GM12878 (cell line): ENCODE measurements at regions of chr19 and their contacts with region 1.

Region 1: GRCh38 chr19:38402967-38403861 is at the start of gene FAM98C:
- DNase-seq: peak; percentile 76
- ATAC-seq: peak; percentile 99
- H3K4me3 ChIP-seq: peak within 1 kb of the TSS; percentile 86
- H3K27ac ChIP-seq: peak within 1 kb of the TSS; percentile 72
- H3K4me1 ChIP-seq: no peaks in the 10 kb centered on the region
- H3K27me3 ChIP-seq: no peaks in the 10 kb centered on the region
- CTCF ChIP-seq: peak; percentile 88 to 94 (median 90)
- EP300 ChIP-seq: no peak
- POLR2A ChIP-seq: peak; percentile 85
- RAD21 ChIP-seq: peak; percentile 90
- polyA plus RNA-seq, gene FAM98C: 1.4 to 2.3 TPM

Region 2: DNA sequence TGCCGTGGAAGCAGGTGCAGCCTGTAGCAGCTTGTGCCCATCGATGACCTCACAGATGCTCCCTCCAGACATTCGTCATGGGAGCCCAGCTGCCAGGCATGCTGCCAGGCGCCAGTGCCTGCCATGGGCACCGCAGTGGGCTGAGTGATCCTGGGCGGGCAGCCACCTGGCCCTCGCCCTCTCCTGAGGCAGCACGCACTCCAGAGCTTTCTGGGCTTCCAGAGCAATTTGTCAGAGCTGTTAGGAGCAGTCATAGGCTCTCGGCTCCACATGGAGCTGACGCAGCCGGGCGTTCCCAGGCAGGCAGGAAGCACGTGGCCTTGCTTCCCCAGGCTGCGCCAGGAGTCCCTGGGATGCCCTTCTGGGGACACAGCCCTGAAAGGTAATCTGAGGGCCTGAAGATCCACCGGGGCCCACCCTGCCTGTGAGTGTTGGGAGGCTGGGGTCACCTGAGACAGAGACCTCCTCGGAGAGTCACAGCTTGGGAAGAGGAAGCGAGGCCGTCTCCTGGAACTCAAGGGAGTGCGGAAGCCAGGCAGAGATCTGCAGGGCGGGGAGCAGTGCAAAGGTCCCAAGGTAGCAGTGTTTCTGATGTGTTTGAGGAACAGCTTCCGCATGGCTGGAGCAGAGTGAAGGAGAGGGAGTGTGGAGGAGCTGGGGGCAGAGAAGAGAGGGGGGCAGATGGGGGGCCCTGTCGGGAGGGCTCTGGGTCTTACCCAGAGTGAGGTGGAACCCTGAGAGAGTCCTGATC is 229.7 kb before region 1 on chr19:
- CTCF ChIA-PET with region 1: no interaction called
- POLR2A ChIA-PET with region 1: no interaction called
- RAD21 ChIA-PET with region 1: no interaction called
- SMC1A ChIA-PET with region 1: no interaction called
- in situ Hi-C with region 1: no loop called
- intact Hi-C with region 1: no loop called
- DNase-seq: no peak
- ATAC-seq: no peak
- H3K4me3 ChIP-seq: no peak overlapping the region
- H3K27ac ChIP-seq: no peak overlapping the region
- H3K4me1 ChIP-seq: no peaks in the 10 kb centered on the region
- H3K27me3 ChIP-seq: no peaks in the 10 kb centered on the region
- CTCF ChIP-seq: no peak
- EP300 ChIP-seq: no peak
- POLR2A ChIP-seq: peak; percentile 40; the same call in 1 of the 2 replicates
- RAD21 ChIP-seq: no peak

Region 3: GRCh38 chr19:38245826-38246498 is 157.3 kb before region 1 on chr19:
- CTCF ChIA-PET with region 1: interaction called, 7 read pairs
- POLR2A ChIA-PET with region 1: no interaction called
- RAD21 ChIA-PET with region 1: interaction called, 14 read pairs
- SMC1A ChIA-PET with region 1: no interaction called
- in situ Hi-C with region 1: no loop called
- intact Hi-C with region 1: no loop called
- DNase-seq: no peak
- ATAC-seq: no peak
- H3K4me3 ChIP-seq: no peak overlapping the region
- H3K27ac ChIP-seq: no peak overlapping the region
- H3K4me1 ChIP-seq: no peaks in the 10 kb centered on the region
- H3K27me3 ChIP-seq: no peaks in the 10 kb centered on the region
- CTCF ChIP-seq: no peak
- EP300 ChIP-seq: no peak
- POLR2A ChIP-seq: no peak
- RAD21 ChIP-seq: no peak

Region 4: GRCh38 chr19:38425810-38426466 is 22.7 kb after region 1 on chr19 and contains the start of gene RASGRP4:
- CTCF ChIA-PET with region 1: interaction called, 9 read pairs
- POLR2A ChIA-PET with region 1: no interaction called
- RAD21 ChIA-PET with region 1: interaction called, 5 read pairs
- SMC1A ChIA-PET with region 1: interaction called, 17 read pairs
- in situ Hi-C with region 1: no loop called
- intact Hi-C with region 1: no loop called
- DNase-seq: no peak
- ATAC-seq: peak; percentile 71
- H3K4me3 ChIP-seq: peak within 1 kb of the TSS; percentile 44; the same call in 1 of the 2 replicates
- H3K27ac ChIP-seq: peak within 1 kb of the TSS; percentile 4; the same call in 1 of the 2 replicates
- H3K4me1 ChIP-seq: peaks cover 16% of the 10 kb centered on the region
- H3K27me3 ChIP-seq: no peaks in the 10 kb centered on the region
- CTCF ChIP-seq: peak in 1 of 3 experiments; percentile 4; a peak in 1 of 6 replicates
- EP300 ChIP-seq: no peak
- POLR2A ChIP-seq: no peak
- RAD21 ChIP-seq: no peak
- polyA plus RNA-seq, gene RASGRP4: 0.26 to 0.55 TPM

Region 5: DNA sequence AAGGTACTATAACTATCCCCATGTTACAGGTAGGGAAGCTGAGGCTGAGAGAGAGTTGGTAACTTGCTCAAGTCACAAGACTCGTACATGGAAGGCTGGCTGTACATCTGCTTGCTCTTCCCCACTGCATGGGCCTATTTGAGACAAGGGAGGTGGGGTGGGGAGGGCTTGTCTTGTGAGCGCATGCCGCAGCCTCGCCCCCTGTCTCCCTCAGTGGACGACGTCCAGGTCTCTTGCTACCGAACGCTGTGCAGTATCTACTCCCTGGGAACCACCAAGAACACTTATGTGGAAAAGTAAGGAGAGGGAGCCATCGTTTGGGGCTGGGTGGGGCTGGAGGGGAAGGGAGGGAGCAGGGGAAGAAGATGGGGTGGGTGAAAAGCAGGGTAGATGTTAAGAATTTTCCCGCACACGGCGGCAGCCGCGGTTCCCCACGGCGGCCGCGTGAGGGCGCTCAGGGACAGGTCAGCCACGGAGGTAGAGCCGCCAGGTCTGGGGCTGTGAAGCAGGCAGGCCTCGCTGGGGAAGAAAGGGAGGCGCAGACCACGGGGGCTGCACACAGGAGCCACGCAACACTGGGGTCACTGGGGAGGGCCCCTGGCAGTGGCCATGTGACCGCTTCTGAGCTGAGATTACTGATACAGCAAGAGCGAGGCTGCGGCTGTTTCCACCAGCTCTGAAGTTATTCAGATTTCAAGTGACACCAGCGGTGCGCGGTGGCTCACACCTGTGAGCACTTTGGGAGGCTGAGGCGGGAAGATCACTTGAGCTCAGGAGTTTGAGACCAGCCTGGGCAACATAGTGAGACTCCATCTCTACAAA is 111.8 kb after region 1 on chr19:
- CTCF ChIA-PET with region 1: interaction called, 23 read pairs
- POLR2A ChIA-PET with region 1: no interaction called
- RAD21 ChIA-PET with region 1: interaction called, 17 read pairs
- SMC1A ChIA-PET with region 1: interaction called, 5 read pairs
- in situ Hi-C with region 1: no loop called
- intact Hi-C with region 1: no loop called
- DNase-seq: no peak
- ATAC-seq: peak; percentile 96
- H3K4me3 ChIP-seq: no peak overlapping the region
- H3K27ac ChIP-seq: no peak overlapping the region
- H3K4me1 ChIP-seq: peaks cover 6% of the 10 kb centered on the region
- H3K27me3 ChIP-seq: no peaks in the 10 kb centered on the region
- CTCF ChIP-seq: peak; percentile 89 to 98 (median 90); a peak in 5 of 6 replicates
- EP300 ChIP-seq: no peak
- POLR2A ChIP-seq: no peak
- RAD21 ChIP-seq: peak; percentile 74

Region 6: DNA sequence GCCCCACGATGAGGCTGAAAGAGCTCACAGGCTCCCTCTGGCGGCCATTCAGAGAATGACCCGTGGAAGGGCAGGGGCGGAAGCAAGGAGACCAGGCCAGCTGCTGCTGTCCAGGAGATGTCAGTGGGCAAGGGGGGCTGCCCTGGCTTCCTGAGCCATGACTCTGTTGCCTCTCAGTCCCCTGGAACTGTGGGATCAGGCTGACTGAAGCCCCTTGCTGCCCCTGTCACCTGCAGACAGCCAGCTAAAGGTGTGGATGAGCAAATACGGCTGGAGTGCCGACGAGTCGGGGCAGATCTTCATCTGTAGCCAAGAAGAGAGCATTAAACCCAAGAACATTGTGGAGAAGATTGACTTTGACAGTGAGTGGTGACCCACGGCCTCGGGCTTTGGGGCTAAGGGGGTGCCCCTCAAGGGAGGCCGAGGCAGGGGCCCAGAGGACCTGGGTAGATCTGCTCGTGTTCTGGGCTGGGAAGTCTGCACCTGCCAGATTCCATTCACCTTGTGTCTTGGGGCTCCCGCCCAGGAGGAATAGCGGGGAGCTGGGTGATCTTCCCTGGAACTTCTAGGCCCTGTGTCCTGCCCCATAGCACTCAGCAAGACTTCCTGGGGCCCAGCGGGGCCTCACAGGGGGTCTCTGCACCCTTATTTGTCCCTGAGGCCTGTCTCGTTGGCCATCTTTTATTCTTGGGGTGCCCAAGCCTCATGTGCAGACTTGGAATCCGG is 231.7 kb after region 1 on chr19:
- CTCF ChIA-PET with region 1: interaction called, 9 read pairs
- POLR2A ChIA-PET with region 1: interaction called, 4 read pairs
- RAD21 ChIA-PET with region 1: interaction called, 24 read pairs
- SMC1A ChIA-PET with region 1: interaction called, 18 read pairs
- in situ Hi-C with region 1: loop called (anchors 25 kb)
- intact Hi-C with region 1: loop called (anchors 5 kb)
- DNase-seq: peak; percentile 32
- ATAC-seq: peak; percentile 73
- H3K4me3 ChIP-seq: no peak overlapping the region
- H3K27ac ChIP-seq: no peak overlapping the region; the same call in 1 of the 2 replicates
- H3K4me1 ChIP-seq: peaks cover 15% of the 10 kb centered on the region
- H3K27me3 ChIP-seq: no peaks in the 10 kb centered on the region
- CTCF ChIP-seq: peak; percentile 86 to 91 (median 88)
- EP300 ChIP-seq: no peak
- POLR2A ChIP-seq: 0 out of 2 replicates have a peak, but pooled peaks have one; percentile 27
- RAD21 ChIP-seq: peak; percentile 83

Region 7: GRCh38 chr19:38891771-38892170 is 488.6 kb after region 1 on chr19:
- CTCF ChIA-PET with region 1: interaction called, 12 read pairs
- POLR2A ChIA-PET with region 1: no interaction called
- RAD21 ChIA-PET with region 1: interaction called, 6 read pairs
- SMC1A ChIA-PET with region 1: interaction called, 11 read pairs
- in situ Hi-C with region 1: no loop called
- intact Hi-C with region 1: loop called (anchors 1 kb)
- DNase-seq: no peak
- ATAC-seq: no peak
- H3K4me3 ChIP-seq: no peak overlapping the region
- H3K27ac ChIP-seq: no peak overlapping the region
- H3K4me1 ChIP-seq: no peaks in the 10 kb centered on the region
- H3K27me3 ChIP-seq: no peaks in the 10 kb centered on the region
- CTCF ChIP-seq: no peak
- EP300 ChIP-seq: no peak
- POLR2A ChIP-seq: no peak
- RAD21 ChIP-seq: no peak